ENCODE measurements at regions of chr1 and their contacts with region 1.

Region 1: DNA sequence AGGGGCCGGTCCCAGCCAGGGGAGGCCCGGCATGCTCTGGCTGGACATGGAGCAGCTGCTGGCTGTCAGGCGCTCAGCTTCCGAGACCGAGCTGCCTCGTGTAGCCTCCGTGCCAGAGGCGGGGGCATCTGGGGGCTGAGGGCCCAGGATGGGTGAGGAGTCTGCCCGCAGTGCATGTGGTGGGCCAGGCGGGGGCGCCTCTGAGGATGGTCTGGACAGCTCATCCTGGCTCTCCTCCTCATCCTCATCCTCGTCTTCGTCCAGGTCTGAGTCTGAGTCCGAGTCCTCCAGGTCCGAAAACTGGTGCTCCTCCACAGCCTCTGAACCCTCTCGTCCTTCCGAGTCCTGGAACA is 28.9 kb upstream of the EDN2 start:
- DNase-seq: no peak
- ATAC-seq: no peak

Region 2: DNA sequence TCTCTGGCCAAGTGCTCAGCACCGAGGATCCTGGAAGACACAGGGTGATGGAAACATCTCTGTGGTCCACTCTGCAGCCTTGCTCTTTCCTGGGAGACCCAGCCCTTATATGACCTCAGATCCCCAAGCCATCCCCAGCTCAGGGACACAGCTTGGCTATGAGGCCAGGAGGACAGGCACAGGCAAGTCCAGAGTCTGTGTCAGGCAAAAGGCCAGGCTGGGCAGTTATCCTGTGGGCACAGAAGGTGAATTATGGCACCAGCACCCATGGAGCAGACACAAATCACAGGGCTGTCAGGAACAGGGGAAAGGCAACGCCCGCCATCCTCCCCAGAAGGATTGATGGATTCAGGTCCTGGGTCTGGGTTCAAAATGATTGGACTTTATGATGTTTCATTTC is 219.1 kb before region 1 on chr1:
- intact Hi-C with region 1: no loop called
- DNase-seq: no peak
- ATAC-seq: no peak

Region 3: GRCh38 chr1:41428288-41429029 is 84.9 kb before region 1 on chr1:
- intact Hi-C with region 1: loop called (anchors 5 kb)
- DNase-seq: no peak
- ATAC-seq: no peak

Region 4: GRCh38 chr1:41444246-41444645 is 69.1 kb before region 1 on chr1:
- intact Hi-C with region 1: no loop called
- DNase-seq: no peak
- ATAC-seq: no peak

Measured in sciatic nerve (tissue), 2 donors.